Aorta (tissue), 5 donors: ENCODE measurements at regions of chr5 and their contacts with region 1.

Region 1: GRCh38 chr5:174311531-174312269 is 266.2 kb downstream of the NSG2 start:
- DNase-seq: peak; percentile 78 to 92
- ATAC-seq: peak; percentile 78
- H3K4me3 ChIP-seq: peak overlapping the region in 1 of 2 donors; percentile 11
- H3K27ac ChIP-seq: no peak overlapping the region
- H3K4me1 ChIP-seq: no peaks in the 10 kb centered on the region
- H3K27me3 ChIP-seq: no peaks in the 10 kb centered on the region

Region 2: DNA sequence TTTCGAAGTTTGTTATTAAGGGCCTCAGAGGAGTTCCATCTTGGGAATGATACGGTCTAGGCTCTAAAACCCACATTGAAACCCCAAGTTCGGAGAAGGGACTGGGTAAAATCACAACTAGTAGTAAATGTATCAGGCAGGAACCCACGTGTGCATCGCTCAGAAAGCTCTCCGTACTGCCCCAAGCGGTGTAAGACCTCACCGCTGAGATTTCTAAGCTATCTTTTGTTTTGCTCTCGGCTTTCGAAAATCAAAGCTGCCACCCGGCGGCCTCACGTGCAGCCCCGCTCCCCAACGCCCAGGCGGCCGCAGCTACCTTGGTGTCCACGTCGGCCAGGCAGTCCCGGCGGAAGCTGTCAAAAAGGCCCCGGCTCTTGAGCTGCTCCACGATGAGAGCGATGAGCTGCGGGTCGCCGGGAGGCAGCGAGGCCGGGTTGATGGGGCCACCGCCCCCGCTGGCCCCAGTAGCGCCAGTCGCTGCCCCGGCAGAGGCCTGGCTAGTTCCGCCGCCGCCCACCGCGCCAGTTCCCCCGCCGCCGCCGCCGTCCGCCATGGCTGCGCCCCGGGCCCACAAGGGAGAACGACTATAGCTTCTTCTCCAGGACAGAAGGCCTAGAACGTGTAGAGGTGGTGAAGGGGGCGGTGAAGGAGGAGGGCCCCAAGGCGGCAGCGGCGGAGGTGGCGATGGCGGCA is 695.7 kb before region 1 on chr5:
- intact Hi-C with region 1: loop called (anchors 2 to 5 kb)
- DNase-seq: peak; percentile 63 to 82
- ATAC-seq: peak; percentile 79
- H3K4me3 ChIP-seq: peak overlapping the region; percentile 86 to 99
- H3K27ac ChIP-seq: peak overlapping the region; percentile 60 to 91
- H3K4me1 ChIP-seq: no peaks in the 10 kb centered on the region
- H3K27me3 ChIP-seq: no peaks in the 10 kb centered on the region

Region 3: GRCh38 chr5:174045470-174046025 is 266.2 kb before region 1 on chr5 and contains the start of gene NSG2:
- intact Hi-C with region 1: loop called in 1 of 2 experiments (anchors 10 kb)
- DNase-seq: peak; percentile 69 to 85
- ATAC-seq: peak; percentile 79
- H3K4me3 ChIP-seq: no peak within 1 kb of the TSS
- H3K27ac ChIP-seq: no peak within 1 kb of the TSS
- H3K4me1 ChIP-seq: no peaks in the 10 kb centered on the region
- H3K27me3 ChIP-seq: no peaks in the 10 kb centered on the region
- total RNA-seq, gene NSG2: not detected

Region 4: DNA sequence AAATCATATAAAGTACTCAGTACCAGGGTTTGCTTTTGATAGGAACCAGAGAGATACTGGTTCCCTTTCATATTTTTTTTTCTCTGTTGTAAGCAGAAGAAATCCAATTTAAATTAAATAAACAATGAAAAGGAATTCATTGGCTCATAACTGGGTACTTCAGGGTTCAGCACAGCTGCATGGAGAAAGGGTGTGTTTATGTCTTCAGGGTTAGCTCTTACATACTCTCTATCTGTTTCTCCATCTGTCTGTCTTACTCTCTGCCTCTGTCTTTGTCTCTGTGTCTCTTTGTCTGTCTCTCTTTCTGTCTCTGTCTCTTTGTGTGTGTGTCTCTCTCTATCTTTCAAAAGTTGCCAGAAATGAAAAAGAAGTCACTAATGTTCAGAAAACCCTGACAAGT is 758.6 kb after region 1 on chr5:
- intact Hi-C with region 1: no loop called
- DNase-seq: no peak
- ATAC-seq: no peak
- H3K4me3 ChIP-seq: no peak overlapping the region
- H3K27ac ChIP-seq: no peak overlapping the region
- H3K4me1 ChIP-seq: no peaks in the 10 kb centered on the region
- H3K27me3 ChIP-seq: no peaks in the 10 kb centered on the region